CD4-positive, alpha-beta T cell (primary cell): ENCODE measurements at regions of chr1 and their contacts with region 1.

Region 1: DNA sequence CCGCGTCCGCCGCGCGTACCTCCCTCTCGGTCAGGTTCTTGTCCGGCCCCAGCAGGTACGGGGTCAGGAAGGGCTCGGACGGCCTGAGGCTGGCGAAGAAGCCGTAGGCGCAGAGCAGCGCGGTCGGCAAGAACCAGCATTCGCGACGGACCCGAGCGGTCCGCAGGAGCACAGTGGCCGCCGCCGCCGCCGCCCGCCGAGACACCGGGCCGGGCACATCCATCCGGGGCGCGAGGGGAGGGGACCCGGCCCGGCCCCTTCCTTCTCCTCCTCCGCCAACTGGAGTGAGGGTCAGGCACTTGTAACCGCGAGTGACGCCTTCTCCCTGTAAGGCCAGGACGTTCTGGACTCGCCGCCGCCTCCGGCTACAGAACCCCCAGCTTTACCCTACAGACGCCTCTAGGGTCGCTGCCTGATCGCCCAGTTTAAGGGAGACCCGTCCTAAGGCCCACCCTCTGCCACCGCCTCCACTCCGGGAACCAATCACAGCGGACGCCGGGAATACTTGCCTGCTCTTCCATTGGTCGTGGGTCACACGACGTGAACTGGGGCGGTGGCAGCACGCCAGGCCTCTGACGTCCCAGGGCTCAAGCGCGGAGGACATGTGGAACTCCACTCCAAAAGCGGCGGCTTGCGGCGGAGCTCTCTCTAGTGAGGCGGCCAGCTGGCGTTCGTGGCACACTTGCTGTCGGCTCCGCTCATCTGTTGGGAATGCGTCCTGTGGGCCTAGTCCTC is at the start of gene SLC19A2:
- DNase-seq: peak; percentile 82 to 97 (median 90)
- ATAC-seq: peak; percentile 99
- H3K4me3 ChIP-seq: peak within 1 kb of the TSS; percentile 73
- H3K4me3 Mint-ChIP-seq: peak within 1 kb of the TSS; percentile 98
- H3K27ac ChIP-seq: peak within 1 kb of the TSS; percentile 54 to 65
- H3K27ac Mint-ChIP-seq: peak within 1 kb of the TSS; percentile 92
- H3K4me1 ChIP-seq: peaks cover 20% of the 10 kb centered on the region
- H3K4me1 Mint-ChIP-seq: peaks cover 48% of the 10 kb centered on the region
- H3K27me3 ChIP-seq: no peaks in the 10 kb centered on the region
- H3K27me3 Mint-ChIP-seq: no peaks in the 10 kb centered on the region
- CTCF ChIP-seq: peak; percentile 44
- total RNA-seq, gene SLC19A2: 3.6 to 3.7 TPM

Region 2: DNA sequence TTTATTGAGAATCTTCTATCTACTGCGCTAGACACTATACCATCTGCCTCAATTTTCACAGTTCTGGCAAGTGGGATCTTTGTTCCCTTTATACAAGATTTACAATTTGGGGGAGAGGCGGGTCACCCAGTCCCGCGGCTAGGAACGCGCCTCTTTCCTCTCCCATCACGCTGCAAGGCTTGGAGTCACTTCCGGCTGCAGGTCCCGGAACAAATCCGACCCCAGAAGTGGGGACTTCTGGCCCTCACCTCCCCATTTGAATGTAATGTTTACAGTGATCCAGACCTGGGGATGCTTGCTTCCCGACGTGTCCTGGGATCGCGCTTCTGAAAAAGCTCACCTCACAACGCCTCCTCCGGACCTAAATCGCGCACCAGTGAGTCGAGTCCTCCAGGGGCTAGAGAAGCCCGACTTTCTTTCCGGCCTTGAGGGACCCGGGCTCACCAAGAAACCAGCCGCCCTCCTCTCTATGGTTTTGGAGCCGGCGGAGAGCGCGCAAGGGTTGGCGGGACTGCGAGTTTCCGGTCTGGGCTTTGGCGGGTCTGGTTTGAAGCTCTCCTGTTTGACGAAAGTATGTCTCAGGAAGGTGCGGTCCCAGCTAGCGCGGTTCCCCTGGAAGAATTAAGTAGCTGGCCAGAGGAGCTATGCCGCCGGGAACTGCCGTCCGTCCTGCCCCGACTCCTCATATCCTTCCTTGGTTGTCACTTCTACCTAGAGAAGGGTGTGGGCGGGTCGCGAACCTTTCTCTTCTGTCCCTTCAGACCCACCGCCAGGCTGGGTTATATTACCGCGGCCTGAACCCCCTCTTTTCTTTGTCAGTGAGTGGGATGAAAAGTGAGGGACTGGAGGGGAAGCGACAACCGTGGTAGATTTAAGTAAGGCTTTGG is 309.1 kb after region 1 on chr1 and contains the start of gene METTL18:
- CTCF ChIA-PET with region 1: no interaction called
- POLR2A ChIA-PET with region 1: interaction called, 4 read pairs
- intact Hi-C with region 1: loop called in 1 of 2 experiments (anchors 5 kb)
- DNase-seq: peak; percentile 82 to 96 (median 88)
- ATAC-seq: peak; percentile 97
- H3K4me3 ChIP-seq: peak within 1 kb of the TSS; percentile 81
- H3K4me3 Mint-ChIP-seq: peak within 1 kb of the TSS; percentile 99
- H3K27ac ChIP-seq: peak within 1 kb of the TSS; percentile 89 to 94
- H3K27ac Mint-ChIP-seq: peak within 1 kb of the TSS; percentile 94
- H3K4me1 ChIP-seq: peaks cover 13% of the 10 kb centered on the region
- H3K4me1 Mint-ChIP-seq: peaks cover 52% of the 10 kb centered on the region
- H3K27me3 ChIP-seq: no peaks in the 10 kb centered on the region
- H3K27me3 Mint-ChIP-seq: no peaks in the 10 kb centered on the region
- CTCF ChIP-seq: no peak
- total RNA-seq, gene METTL18: 5.1 to 5.6 TPM